Calu3 (cell line): ENCODE measurements at regions of chr7 and their contacts with region 1.

Region 1: DNA sequence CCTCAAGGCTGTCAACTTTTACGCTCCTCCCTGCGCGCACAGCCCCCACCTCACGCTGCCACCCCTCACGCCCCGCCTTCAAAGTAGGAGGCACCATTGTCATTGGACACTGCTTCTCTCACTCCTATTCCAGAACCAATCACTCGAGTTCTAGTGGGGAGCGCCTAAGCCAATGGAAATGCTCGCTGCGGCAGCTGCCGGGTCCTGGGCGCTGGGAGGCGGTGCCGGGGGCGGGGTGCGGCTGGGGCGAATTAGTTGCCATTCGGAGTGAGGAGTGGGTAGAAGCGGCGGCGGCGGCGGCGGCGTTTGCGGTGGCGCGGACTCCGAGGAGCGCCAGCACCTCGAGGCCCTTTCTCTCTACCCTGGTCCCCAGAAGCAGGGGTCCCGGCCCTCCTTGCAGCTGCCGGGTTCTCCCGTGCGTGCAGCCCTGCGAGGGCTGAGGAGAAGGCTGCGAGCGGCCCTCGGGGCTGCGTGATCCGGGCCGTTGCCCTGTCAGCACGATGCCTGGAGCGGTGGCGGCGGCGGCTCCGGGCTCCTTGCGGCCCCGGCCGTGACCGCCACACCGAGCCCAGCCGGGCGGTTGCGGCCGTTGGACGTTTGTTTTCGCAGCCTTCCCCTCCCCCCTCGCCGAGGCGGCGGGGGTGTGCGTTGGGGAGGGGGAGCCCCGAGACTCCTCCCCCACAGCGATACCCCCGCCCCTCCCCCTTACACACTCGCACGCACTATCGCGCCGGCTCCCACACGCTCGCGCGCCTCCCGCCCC is at the start of gene GLCCI1:
- DNase-seq: peak; percentile 99
- H3K4me3 Mint-ChIP-seq: no peak within 1 kb of the TSS
- H3K27ac Mint-ChIP-seq: peak within 1 kb of the TSS; percentile 52
- H3K4me1 Mint-ChIP-seq: no peaks in the 10 kb centered on the region
- H3K27me3 Mint-ChIP-seq: no peaks in the 10 kb centered on the region
- CTCF ChIP-seq: no peak
- total RNA-seq, gene GLCCI1: 10.1 and 12.9 TPM in 2 replicates

Region 2: GRCh38 chr7:7696458-7697119 is 272.1 kb before region 1 on chr7:
- CTCF ChIA-PET with region 1: interaction called, 3 read pairs
- intact Hi-C with region 1: loop called (anchors 5 kb)
- DNase-seq: peak; percentile 27
- H3K4me3 Mint-ChIP-seq: peak overlapping the region; percentile 36
- H3K27ac Mint-ChIP-seq: peak overlapping the region; percentile 76
- H3K4me1 Mint-ChIP-seq: peaks cover 48% of the 10 kb centered on the region
- H3K27me3 Mint-ChIP-seq: no peaks in the 10 kb centered on the region
- CTCF ChIP-seq: no peak

Region 3: DNA sequence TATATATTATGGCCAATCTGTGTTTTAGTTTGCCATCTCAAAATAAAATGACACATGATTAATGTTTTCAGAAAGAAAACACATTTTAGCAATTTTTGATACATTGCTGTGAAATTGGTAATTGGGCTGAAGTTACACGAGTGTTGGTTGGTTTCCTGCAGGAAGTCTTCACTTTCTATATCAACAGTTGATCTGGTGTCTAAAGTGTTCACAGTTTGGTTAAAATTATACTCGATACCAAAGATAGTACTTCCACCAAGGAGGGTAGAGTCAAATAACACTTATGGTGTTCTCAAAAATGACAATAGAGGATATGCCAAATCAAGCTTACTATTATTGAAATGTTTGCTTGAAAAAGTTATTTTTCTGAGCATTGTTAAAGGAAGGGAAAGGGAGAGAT is 120.5 kb before region 1 on chr7:
- CTCF ChIA-PET with region 1: no interaction called
- intact Hi-C with region 1: loop called (anchors 5 kb)
- DNase-seq: no peak
- H3K4me3 Mint-ChIP-seq: no peak overlapping the region
- H3K27ac Mint-ChIP-seq: no peak overlapping the region
- H3K4me1 Mint-ChIP-seq: peaks cover 35% of the 10 kb centered on the region
- H3K27me3 Mint-ChIP-seq: no peaks in the 10 kb centered on the region
- CTCF ChIP-seq: no peak

Region 4: GRCh38 chr7:7876419-7876818 is 92.3 kb before region 1 on chr7:
- CTCF ChIA-PET with region 1: no interaction called
- intact Hi-C with region 1: no loop called
- DNase-seq: no peak
- H3K4me3 Mint-ChIP-seq: no peak overlapping the region
- H3K27ac Mint-ChIP-seq: no peak overlapping the region
- H3K4me1 Mint-ChIP-seq: no peaks in the 10 kb centered on the region
- H3K27me3 Mint-ChIP-seq: no peaks in the 10 kb centered on the region
- CTCF ChIP-seq: no peak

Region 5: GRCh38 chr7:7989133-7989984 is 20.6 kb after region 1 on chr7:
- CTCF ChIA-PET with region 1: no interaction called
- intact Hi-C with region 1: loop called (anchors 1 kb)
- DNase-seq: no peak
- H3K4me3 Mint-ChIP-seq: peak overlapping the region; percentile 10
- H3K27ac Mint-ChIP-seq: no peak overlapping the region
- H3K4me1 Mint-ChIP-seq: no peaks in the 10 kb centered on the region
- H3K27me3 Mint-ChIP-seq: no peaks in the 10 kb centered on the region
- CTCF ChIP-seq: no peak

Region 6: DNA sequence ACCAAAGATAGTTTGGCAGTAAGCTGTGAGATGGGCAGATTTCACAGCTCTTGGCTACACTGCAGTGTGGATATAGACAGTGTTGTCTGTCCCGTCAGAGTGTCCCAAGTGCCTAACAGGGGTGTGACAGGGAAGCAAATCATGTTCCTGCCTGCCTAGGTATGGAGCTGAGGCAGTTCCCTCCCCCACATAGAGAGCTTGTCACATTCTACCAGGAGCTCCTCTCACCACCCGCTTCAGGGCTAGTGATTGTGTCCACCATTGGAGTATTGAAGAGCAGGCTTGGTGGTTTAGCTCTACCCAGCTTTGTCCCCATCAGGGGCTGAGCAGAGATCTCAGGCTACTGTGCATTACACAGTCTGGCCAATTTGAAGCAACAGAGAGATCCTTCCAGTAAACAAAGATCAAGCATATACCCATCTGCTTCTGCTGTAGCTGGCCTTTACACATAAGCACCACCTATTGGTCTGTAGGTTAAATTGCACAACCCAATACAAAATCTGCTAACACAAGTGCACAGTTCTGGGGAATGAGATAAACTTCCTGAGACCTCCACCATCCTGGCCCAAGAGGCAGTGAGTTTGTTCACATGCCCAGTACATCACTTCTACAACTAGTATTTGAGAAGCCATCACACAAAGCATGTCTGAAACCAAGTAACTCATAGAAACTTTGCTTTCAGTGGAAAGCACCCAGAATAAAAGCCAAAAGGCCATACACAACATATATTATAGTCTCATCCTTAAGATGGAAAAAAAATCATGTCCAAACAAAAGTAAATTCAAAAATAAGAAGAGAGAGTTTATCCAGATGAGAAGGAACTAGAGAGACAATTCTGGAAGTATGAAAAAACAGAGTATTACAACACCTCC is 67.2 kb after region 1 on chr7:
- CTCF ChIA-PET with region 1: interaction called, 7 read pairs
- intact Hi-C with region 1: loop called (anchors 2 kb)
- DNase-seq: no peak
- H3K4me3 Mint-ChIP-seq: no peak overlapping the region
- H3K27ac Mint-ChIP-seq: no peak overlapping the region
- H3K4me1 Mint-ChIP-seq: peaks cover 16% of the 10 kb centered on the region
- H3K27me3 Mint-ChIP-seq: no peaks in the 10 kb centered on the region
- CTCF ChIP-seq: peak; percentile 68